AG04449 (cell line): ENCODE measurements at regions of chr15 and their contacts with region 1.

Region 1: GRCh38 chr15:43903864-43904290 is 77.1 kb downstream of the WDR76 start:
- DNase-seq: no peak
- H3K4me3 ChIP-seq: no peak overlapping the region
- CTCF ChIP-seq: peak; percentile 70

Region 2: GRCh38 chr15:43854801-43855200 is 49.1 kb before region 1 on chr15:
- CTCF ChIA-PET with region 1: no interaction called
- POLR2A ChIA-PET with region 1: no interaction called
- DNase-seq: no peak
- H3K4me3 ChIP-seq: no peak overlapping the region
- CTCF ChIP-seq: no peak

Region 3: DNA sequence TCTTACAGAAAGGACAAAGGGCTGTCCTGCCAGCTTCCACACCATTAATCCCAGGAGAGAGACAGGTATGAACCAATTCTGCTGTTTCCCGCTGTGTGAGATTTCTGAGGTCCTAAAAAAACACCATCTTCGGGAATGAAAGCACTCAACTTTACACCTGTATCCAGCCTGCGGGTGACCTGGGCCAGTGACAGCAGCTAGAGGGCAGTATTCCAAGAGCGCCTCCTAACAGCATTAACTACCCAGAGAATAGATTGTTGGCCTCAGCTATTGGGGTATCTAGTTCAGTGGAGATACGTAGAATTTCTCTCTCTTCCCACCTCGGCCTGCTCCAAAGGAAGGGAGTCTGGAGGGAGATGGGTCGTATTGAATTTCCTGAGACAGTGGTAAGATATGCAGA is 21.9 kb before region 1 on chr15:
- CTCF ChIA-PET with region 1: interaction called, 84 read pairs
- POLR2A ChIA-PET with region 1: no interaction called
- DNase-seq: no peak
- H3K4me3 ChIP-seq: no peak overlapping the region
- CTCF ChIP-seq: peak; percentile 24

Region 4: GRCh38 chr15:43977072-43977884 is 73.4 kb after region 1 on chr15:
- CTCF ChIA-PET with region 1: no interaction called
- POLR2A ChIA-PET with region 1: no interaction called
- DNase-seq: no peak
- H3K4me3 ChIP-seq: no peak overlapping the region
- CTCF ChIP-seq: no peak

Region 5: DNA sequence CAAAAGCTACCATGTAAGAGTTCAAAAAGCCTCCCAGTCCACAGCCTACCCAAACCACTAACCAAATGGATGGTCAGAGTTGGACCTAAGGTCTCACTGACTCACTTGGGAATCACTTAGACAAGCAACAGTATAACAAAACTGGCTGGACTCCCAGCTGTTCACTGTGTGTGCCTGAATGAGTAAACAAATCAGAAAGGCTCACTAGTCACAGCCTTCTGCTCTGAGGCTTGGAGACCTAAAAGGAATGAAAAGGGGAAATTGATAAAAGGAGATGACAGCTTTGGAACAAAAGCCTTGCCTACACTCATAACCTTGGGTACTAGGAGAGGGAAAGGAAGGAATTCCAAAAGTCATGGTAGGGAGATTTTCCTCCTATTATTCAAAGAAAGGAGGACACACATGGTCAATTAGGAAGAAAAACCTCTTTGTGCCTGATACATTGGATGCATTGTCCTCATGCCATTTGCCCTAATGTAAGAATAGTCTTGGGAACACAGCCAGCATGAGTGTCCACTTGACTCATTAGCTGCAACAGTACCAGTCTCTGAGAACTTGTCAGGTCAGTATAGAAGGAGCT is 198.9 kb after region 1 on chr15:
- CTCF ChIA-PET with region 1: interaction called, 12 read pairs
- POLR2A ChIA-PET with region 1: no interaction called
- DNase-seq: peak; percentile 83
- H3K4me3 ChIP-seq: no peak overlapping the region
- CTCF ChIP-seq: no peak

Region 6: DNA sequence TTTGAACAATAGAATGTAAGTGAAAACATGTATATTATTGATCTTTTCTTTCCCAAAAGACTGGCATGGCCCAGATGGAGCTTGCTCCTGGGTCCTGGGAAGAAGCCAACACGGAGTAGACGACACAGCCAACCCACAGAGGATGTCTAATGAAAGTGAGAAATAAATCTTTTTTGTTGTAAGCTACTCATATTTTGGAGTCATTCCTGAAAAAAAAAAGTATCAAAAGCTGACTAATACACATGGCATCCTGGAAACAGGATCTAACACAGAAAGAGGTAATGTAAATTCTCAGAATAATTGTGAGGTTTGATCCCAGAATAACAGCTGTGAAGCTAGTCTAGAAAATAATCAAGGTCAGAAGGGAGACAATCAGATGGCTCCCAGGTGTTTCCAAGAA is 303.8 kb after region 1 on chr15:
- CTCF ChIA-PET with region 1: interaction called, 160 read pairs
- POLR2A ChIA-PET with region 1: no interaction called
- DNase-seq: peak; percentile 21
- H3K4me3 ChIP-seq: no peak overlapping the region
- CTCF ChIP-seq: no peak

Region 7: DNA sequence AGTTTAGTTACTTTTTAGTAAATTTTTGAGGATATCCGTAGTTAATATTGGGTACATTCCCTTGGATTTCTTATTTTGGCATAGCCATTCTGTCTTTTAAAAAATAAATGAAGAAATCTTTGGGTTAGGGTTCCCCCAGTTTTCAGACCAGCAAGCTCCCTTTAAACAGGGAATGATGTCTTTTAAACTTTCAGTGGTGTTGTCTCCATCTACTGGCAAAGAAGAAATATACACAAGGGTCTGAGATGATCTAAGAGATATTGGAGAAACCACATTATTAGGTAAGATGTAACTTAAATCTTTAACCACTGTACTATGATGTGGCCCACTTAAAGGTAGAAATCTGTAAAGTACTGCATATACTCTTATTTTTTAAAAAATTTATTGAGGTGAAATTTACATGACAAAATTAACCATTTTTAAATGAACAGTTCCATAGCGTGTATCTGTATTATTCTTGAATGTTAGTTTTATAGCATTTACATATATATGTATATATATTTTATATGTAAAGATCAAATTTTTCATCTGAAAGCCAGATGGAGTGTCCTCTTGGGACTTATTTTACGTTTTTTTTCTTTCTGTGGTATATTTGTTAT is 598.0 kb after region 1 on chr15:
- CTCF ChIA-PET with region 1: interaction called, 14 read pairs
- POLR2A ChIA-PET with region 1: no interaction called
- DNase-seq: peak; percentile 17
- H3K4me3 ChIP-seq: no peak overlapping the region
- CTCF ChIP-seq: peak; percentile 42